ENCODE measurements at regions of chr4 and their contacts with region 1.

Region 1: GRCh38 chr4:7843831-7844593 is 95.6 kb downstream of the AFAP1 start:
- DNase-seq: peak; percentile 54 to 72 (median 58)
- H3K4me3 ChIP-seq: no peak overlapping the region
- H3K4me3 Mint-ChIP-seq: peak overlapping the region in 1 of 8 donors; percentile 29
- H3K27ac ChIP-seq: no peak overlapping the region
- H3K27ac Mint-ChIP-seq: peak overlapping the region in 6 of 7 donors; percentile 33 to 94 (median 74)
- H3K4me1 ChIP-seq: peaks cover 19% of the 10 kb centered on the region
- H3K4me1 Mint-ChIP-seq: peaks cover 20 to 41% (median 32%) of the 10 kb centered on the region in 4 donors
- H3K27me3 ChIP-seq: no peaks in the 10 kb centered on the region
- H3K27me3 Mint-ChIP-seq: no peaks in the 10 kb centered on the region

Region 2: GRCh38 chr4:7581477-7581876 is 262.5 kb before region 1 on chr4:
- CTCF ChIA-PET with region 1: no interaction called
- POLR2A ChIA-PET with region 1: no interaction called
- intact Hi-C with region 1: no loop called
- DNase-seq: no peak
- H3K4me3 ChIP-seq: no peak overlapping the region
- H3K4me3 Mint-ChIP-seq: no peak overlapping the region
- H3K27ac ChIP-seq: no peak overlapping the region
- H3K27ac Mint-ChIP-seq: no peak overlapping the region
- H3K4me1 ChIP-seq: no peaks in the 10 kb centered on the region
- H3K4me1 Mint-ChIP-seq: no peaks in the 10 kb centered on the region
- H3K27me3 ChIP-seq: no peaks in the 10 kb centered on the region
- H3K27me3 Mint-ChIP-seq: peaks cover under 1 to 3% of the 10 kb centered on the region in 2 donors

Region 3: GRCh38 chr4:7827991-7828720 is 15.9 kb before region 1 on chr4:
- CTCF ChIA-PET with region 1: interaction called, 16 read pairs
- POLR2A ChIA-PET with region 1: interaction called, 10 read pairs
- intact Hi-C with region 1: loop called (anchors 1 kb)
- DNase-seq: peak; percentile 47 to 90 (median 57)
- H3K4me3 ChIP-seq: peak overlapping the region in 1 of 2 donors; percentile 29
- H3K4me3 Mint-ChIP-seq: peak overlapping the region; percentile 5 to 86 (median 77)
- H3K27ac ChIP-seq: peak overlapping the region; percentile 55
- H3K27ac Mint-ChIP-seq: peak overlapping the region; percentile 88 to 97 (median 89)
- H3K4me1 ChIP-seq: peaks cover 53% of the 10 kb centered on the region
- H3K4me1 Mint-ChIP-seq: peaks cover 54 to 71% (median 61%) of the 10 kb centered on the region in 4 donors
- H3K27me3 ChIP-seq: no peaks in the 10 kb centered on the region
- H3K27me3 Mint-ChIP-seq: no peaks in the 10 kb centered on the region

Region 4: GRCh38 chr4:7863911-7864681 is 20.1 kb after region 1 on chr4:
- CTCF ChIA-PET with region 1: interaction called, 18 read pairs
- POLR2A ChIA-PET with region 1: interaction called, 5 read pairs
- intact Hi-C with region 1: no loop called
- DNase-seq: peak in 4 of 5 donors; percentile 36 to 68 (median 58)
- H3K4me3 ChIP-seq: no peak overlapping the region
- H3K4me3 Mint-ChIP-seq: peak overlapping the region in 7 of 8 donors; percentile 35 to 76 (median 61)
- H3K27ac ChIP-seq: no peak overlapping the region
- H3K27ac Mint-ChIP-seq: peak overlapping the region; percentile 60 to 99 (median 91)
- H3K4me1 ChIP-seq: peaks cover 18% of the 10 kb centered on the region
- H3K4me1 Mint-ChIP-seq: peaks cover 26 to 43% (median 34%) of the 10 kb centered on the region in 4 donors
- H3K27me3 ChIP-seq: no peaks in the 10 kb centered on the region
- H3K27me3 Mint-ChIP-seq: peaks cover 0 to 4% of the 10 kb centered on the region in 2 donors

Region 5: DNA sequence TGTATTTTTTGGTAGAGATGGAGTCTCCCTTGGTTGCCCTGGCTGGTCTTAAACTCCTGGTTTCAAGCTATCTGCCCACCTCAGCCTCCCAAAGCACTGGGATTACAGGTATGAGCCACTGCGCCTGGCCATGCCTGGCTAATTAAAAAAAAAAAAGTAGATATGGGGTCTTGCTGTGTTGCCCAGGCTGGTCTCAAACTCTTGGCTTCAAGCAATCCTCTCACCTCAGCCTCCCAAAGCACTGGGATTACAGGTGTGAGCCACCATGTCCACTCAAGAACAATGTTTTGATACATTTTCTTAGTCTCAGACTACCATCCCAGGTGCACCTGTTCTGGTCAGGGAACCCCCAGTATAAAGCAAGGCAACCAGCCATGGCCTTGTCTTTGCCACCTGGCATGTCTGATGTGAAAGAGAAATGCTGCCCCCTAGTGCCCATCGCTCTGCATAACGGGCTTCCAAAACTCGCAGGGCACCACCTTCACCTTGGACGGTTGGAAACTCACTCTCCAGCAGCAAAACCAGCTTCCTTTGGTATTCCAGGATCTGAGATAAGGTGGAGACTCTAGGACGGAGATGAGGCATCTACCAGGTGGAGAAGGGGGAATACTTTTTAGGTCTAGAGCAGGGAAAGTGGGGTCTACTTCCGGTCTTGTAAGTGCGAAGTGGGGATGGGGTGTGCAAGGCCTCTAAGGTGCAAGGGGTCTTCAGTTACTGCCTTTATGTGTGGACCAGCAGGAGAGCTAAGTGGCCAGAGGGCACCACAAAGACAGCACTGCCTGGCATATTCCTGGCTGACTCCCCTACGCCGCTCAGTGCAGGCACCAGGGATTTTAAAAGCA is 143.4 kb after region 1 on chr4:
- CTCF ChIA-PET with region 1: interaction called, 36 read pairs
- POLR2A ChIA-PET with region 1: no interaction called
- intact Hi-C with region 1: no loop called
- DNase-seq: peak; percentile 67 to 71 (median 69)
- H3K4me3 ChIP-seq: no peak overlapping the region
- H3K4me3 Mint-ChIP-seq: no peak overlapping the region
- H3K27ac ChIP-seq: no peak overlapping the region
- H3K27ac Mint-ChIP-seq: no peak overlapping the region
- H3K4me1 ChIP-seq: peaks cover 5% of the 10 kb centered on the region
- H3K4me1 Mint-ChIP-seq: peaks cover 2 to 4% (median 4%) of the 10 kb centered on the region in 4 donors
- H3K27me3 ChIP-seq: no peaks in the 10 kb centered on the region
- H3K27me3 Mint-ChIP-seq: no peaks in the 10 kb centered on the region

Region 6: GRCh38 chr4:8428293-8429097 is 584.5 kb after region 1 on chr4:
- CTCF ChIA-PET with region 1: no interaction called
- POLR2A ChIA-PET with region 1: no interaction called
- intact Hi-C with region 1: no loop called
- DNase-seq: peak; percentile 84 to 96 (median 90)
- H3K4me3 ChIP-seq: peak overlapping the region; percentile 30 to 87
- H3K4me3 Mint-ChIP-seq: peak overlapping the region; percentile 93 to 98 (median 96)
- H3K27ac ChIP-seq: peak overlapping the region; percentile 66
- H3K27ac Mint-ChIP-seq: peak overlapping the region; percentile 92 to 97 (median 95)
- H3K4me1 ChIP-seq: peaks cover 22% of the 10 kb centered on the region
- H3K4me1 Mint-ChIP-seq: peaks cover 20 to 49% (median 29%) of the 10 kb centered on the region in 4 donors
- H3K27me3 ChIP-seq: no peaks in the 10 kb centered on the region
- H3K27me3 Mint-ChIP-seq: no peaks in the 10 kb centered on the region

Measured in CD4-positive, alpha-beta memory T cell (primary cell).